ENCODE measurements at regions of chr11 and their contacts with region 1.

Region 1: DNA sequence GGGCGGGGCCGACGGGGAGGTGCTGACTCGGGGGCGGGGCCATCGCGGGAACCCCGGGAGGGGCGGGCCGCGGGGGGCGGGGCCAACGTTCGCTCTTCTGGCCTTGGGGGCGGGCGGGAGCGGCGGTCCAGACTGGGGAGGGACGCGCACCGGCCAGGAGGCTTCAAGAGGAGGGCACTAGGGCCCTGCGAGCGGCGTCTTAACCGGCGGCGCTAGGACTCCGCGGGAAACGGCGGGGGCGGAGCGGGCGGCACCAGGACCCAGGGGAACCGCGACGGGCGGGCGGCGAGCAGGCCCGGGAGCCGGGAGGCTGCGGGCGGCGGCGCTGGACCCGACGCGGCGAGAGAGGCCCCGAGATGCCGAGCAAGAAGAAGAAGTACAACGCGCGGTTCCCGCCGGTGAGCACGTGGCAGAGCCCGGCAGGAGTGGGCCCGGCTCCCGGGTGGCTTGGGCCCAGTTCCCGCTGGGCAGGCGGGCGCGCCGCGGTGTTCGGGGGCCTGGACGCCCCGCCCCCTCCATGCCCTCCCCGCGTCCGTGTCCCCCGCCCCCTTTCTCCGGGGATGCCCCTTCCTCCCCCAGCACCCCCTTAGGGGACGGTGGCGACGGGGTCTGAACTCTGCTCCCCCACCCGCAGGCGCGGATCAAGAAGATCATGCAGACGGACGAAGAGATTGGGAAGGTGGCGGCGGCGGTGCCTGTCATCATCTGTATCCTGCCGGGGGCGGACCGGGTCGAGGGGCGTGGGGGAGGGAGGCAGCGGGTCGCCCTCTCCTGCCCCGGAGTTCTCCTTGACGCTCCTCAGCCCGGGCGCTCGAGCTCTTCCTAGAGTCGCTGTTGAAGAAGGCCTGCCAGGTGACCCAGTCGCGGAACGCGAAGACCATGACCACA is at the start of gene DRAP1:
- DNase-seq: peak; percentile 99
- ATAC-seq: peak; percentile 66 to 75
- H3K4me3 ChIP-seq: peak within 1 kb of the TSS; percentile 77 to 95 (median 92)
- H3K27ac ChIP-seq: peak within 1 kb of the TSS; percentile 86 to 98 (median 94)
- H3K4me1 ChIP-seq: peaks cover 47 to 49% of the 10 kb centered on the region in 2 donors
- H3K27me3 ChIP-seq: no peaks in the 10 kb centered on the region
- CTCF ChIP-seq: peak in 3 of 5 experiments; percentile 9 to 46 (median 37)
- POLR2A ChIP-seq: peak; percentile 83 to 84
- total RNA-seq, gene DRAP1: 96.7 to 146 (median 110) TPM

Region 2: GRCh38 chr11:65013692-65014145 is 905.7 kb before region 1 on chr11:
- in situ Hi-C with region 1: no loop called
- intact Hi-C with region 1: loop called (anchors 5 kb)
- DNase-seq: peak; percentile 79 to 88
- ATAC-seq: peak; percentile 95
- H3K4me3 ChIP-seq: peak overlapping the region; percentile 78 to 99 (median 87)
- H3K27ac ChIP-seq: peak overlapping the region; percentile 95 to 100 (median 97)
- H3K4me1 ChIP-seq: peaks cover 14 to 18% of the 10 kb centered on the region in 2 donors
- H3K27me3 ChIP-seq: no peaks in the 10 kb centered on the region
- CTCF ChIP-seq: peak in 4 of 5 experiments; percentile 74 to 89 (median 82)
- POLR2A ChIP-seq: peak; percentile 43 to 57

Region 3: GRCh38 chr11:65615229-65615941 is 304.0 kb before region 1 on chr11 and contains the start of gene PCNX3:
- in situ Hi-C with region 1: no loop called
- intact Hi-C with region 1: loop called (anchors 1 kb)
- DNase-seq: peak; percentile 100
- ATAC-seq: peak; percentile 86 to 92
- H3K4me3 ChIP-seq: peak within 1 kb of the TSS; percentile 79 to 85 (median 80)
- H3K27ac ChIP-seq: peak within 1 kb of the TSS; percentile 82 to 93 (median 91)
- H3K4me1 ChIP-seq: peaks cover 30 to 44% of the 10 kb centered on the region in 2 donors
- H3K27me3 ChIP-seq: no peaks in the 10 kb centered on the region
- CTCF ChIP-seq: no peak
- POLR2A ChIP-seq: peak; percentile 27 to 75
- total RNA-seq, gene PCNX3: 7.6 to 15.6 (median 13.1) TPM

Region 4: DNA sequence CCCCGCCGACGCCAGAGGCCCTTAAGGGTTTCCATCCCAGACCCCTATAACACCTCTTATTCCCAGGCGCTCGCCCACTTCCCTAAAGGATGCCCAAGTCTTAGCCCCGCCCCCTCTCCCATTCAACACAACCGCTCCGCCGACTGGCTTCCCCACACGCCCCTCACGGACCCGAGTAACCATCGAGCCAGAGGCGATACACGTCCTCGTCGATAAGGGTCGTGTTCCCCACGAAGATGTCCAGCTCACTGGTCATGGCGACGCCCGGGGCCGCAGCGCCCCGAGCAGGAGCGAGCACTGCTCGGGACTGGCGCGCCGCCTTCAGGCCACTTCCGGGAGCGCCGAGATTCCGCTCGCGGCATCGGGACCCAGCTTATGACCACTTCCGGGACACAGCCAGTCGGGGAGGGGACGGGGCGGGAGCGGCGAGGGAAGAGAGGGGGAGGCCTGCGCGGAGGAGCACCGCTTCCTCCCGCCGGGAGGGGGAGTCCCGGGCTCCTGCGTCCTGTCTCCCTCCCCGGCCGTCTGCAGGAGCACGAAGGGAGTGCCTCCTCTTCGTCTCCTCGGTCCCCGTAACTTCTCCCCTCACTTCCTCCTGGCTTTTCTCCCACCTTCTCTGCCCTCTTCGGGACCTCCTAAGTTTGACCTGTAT is 31.1 kb before region 1 on chr11 and contains the start of gene FIBP:
- in situ Hi-C with region 1: no loop called
- intact Hi-C with region 1: loop called (anchors 1 kb)
- DNase-seq: peak; percentile 97 to 98
- ATAC-seq: peak; percentile 68
- H3K4me3 ChIP-seq: peak within 1 kb of the TSS; percentile 66 to 86 (median 78)
- H3K27ac ChIP-seq: peak within 1 kb of the TSS; percentile 93 to 98 (median 96)
- H3K4me1 ChIP-seq: peaks cover 41 to 45% of the 10 kb centered on the region in 2 donors
- H3K27me3 ChIP-seq: no peaks in the 10 kb centered on the region
- CTCF ChIP-seq: peak; percentile 85 to 95 (median 93)
- POLR2A ChIP-seq: peak; percentile 80 to 92
- total RNA-seq, gene FIBP: 39.6 to 79.3 (median 53.0) TPM

Region 5: GRCh38 chr11:65988791-65989592 is 69.6 kb after region 1 on chr11:
- in situ Hi-C with region 1: no loop called
- intact Hi-C with region 1: loop called (anchors 2 kb)
- DNase-seq: peak; percentile 83 to 91
- ATAC-seq: peak; percentile 100
- H3K4me3 ChIP-seq: no peak overlapping the region
- H3K27ac ChIP-seq: peak overlapping the region in 3 of 4 donors; percentile 6 to 40 (median 32)
- H3K4me1 ChIP-seq: no peaks in the 10 kb centered on the region
- H3K27me3 ChIP-seq: no peaks in the 10 kb centered on the region
- CTCF ChIP-seq: peak; percentile 88 to 98 (median 93)
- POLR2A ChIP-seq: no peak

Region 6: DNA sequence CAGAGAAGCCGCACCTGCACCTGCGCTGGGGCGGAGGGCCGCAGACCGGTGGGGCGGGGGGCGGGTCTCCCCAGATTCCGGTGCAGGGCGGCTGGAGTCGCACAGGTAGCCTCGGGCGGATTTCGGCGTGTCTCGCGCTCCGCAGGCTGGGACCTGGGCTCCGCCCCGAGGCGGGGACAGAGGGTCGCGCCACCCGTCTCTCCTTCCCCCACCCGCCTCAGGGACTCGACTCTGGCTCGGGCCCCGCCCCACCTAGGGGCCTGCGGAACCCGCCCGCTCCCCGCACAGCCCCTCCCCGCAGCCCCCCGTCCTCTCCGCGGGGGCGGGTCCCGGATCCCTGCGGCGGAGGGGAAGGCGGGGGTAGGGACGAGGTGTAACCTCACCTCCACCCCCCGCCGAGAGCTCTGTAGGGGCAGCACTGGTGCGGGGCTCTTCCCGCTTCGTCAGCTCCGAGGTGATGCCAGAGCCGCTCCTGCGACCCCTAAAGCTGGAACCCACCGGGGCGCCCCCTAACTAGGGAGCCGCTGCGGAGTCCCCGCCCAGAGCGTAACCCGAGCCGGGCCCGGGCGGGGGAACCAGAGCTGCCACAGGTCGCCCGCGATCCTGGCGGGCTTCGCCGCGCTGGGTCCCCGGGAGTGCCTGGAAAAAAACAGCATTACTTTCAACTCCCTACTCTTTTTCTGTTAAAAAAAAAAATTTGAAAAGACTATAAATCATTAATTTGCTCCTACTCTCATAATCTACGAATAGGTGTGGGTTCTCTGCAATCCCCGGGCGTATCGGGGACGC is 452.4 kb after region 1 on chr11 and contains the start of gene SLC29A2:
- in situ Hi-C with region 1: no loop called
- intact Hi-C with region 1: loop called (anchors 10 kb)
- DNase-seq: peak; percentile 73 to 87
- ATAC-seq: peak; percentile 34 to 35
- H3K4me3 ChIP-seq: peak within 1 kb of the TSS; percentile 73 to 96 (median 78)
- H3K27ac ChIP-seq: peak within 1 kb of the TSS; percentile 97 to 99 (median 98)
- H3K4me1 ChIP-seq: peaks cover 48 to 58% of the 10 kb centered on the region in 2 donors
- H3K27me3 ChIP-seq: no peaks in the 10 kb centered on the region
- CTCF ChIP-seq: no peak
- POLR2A ChIP-seq: peak; percentile 56 to 69
- total RNA-seq, gene SLC29A2: 39.2 to 106 (median 70.6) TPM

Measured in gastrocnemius medialis (tissue), 4 donors.